CD8-positive, alpha-beta memory T cell (primary cell): ENCODE measurements at regions of chr19 and their contacts with region 1.

Region 1: DNA sequence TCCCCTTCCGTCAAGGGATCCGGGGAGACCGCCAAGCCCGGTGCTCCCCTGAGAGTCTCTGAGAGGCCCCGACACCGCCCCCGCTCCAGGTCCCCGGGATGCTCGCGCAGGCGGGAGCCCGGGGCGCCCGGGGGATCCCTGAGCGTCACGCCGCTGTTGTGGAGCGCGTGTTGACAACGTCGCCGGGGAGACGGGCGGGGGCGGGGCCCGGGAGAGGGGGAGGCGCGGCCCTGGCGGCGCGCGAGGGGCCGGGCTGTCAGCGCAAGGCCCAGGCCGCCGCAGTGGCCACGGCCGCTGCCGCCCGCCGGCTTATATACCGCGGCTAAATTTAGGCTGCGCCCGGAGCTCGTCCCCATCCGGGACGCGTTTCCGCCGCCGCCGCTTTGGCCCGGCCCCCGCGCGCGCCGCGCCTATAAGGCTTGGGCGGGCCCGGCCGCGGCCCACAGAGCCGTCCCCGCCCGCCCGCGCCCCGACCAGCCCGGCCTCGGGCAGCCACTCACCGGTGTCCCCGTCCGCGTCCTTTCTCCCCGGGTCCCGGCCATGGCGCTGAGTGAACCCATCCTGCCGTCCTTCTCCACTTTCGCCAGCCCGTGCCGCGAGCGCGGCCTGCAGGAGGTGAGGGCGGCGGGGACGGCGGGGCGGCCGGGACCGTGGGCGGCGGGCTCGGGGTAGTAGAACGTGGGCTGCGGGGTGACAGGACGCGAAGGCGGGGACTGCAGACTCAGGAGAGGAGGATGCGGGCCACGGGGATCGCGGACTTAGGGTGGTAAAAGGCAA is at the start of gene KLF2:
- DNase-seq: peak; percentile 93 to 98 (median 95)
- H3K4me3 ChIP-seq: peak within 1 kb of the TSS; percentile 100
- H3K4me3 Mint-ChIP-seq: peak within 1 kb of the TSS; percentile 78 to 100 (median 81)
- H3K27ac ChIP-seq: peak within 1 kb of the TSS; percentile 100
- H3K27ac Mint-ChIP-seq: peak within 1 kb of the TSS; percentile 91 to 99 (median 97)
- H3K4me1 ChIP-seq: peaks cover 37% of the 10 kb centered on the region
- H3K4me1 Mint-ChIP-seq: peaks cover 29 to 55% (median 38%) of the 10 kb centered on the region in 3 donors
- H3K27me3 ChIP-seq: no peaks in the 10 kb centered on the region
- H3K27me3 Mint-ChIP-seq: peaks cover 0 to 37% of the 10 kb centered on the region in 2 donors
- total RNA-seq, gene KLF2: 33.7 to 37.5 TPM

Region 2: DNA sequence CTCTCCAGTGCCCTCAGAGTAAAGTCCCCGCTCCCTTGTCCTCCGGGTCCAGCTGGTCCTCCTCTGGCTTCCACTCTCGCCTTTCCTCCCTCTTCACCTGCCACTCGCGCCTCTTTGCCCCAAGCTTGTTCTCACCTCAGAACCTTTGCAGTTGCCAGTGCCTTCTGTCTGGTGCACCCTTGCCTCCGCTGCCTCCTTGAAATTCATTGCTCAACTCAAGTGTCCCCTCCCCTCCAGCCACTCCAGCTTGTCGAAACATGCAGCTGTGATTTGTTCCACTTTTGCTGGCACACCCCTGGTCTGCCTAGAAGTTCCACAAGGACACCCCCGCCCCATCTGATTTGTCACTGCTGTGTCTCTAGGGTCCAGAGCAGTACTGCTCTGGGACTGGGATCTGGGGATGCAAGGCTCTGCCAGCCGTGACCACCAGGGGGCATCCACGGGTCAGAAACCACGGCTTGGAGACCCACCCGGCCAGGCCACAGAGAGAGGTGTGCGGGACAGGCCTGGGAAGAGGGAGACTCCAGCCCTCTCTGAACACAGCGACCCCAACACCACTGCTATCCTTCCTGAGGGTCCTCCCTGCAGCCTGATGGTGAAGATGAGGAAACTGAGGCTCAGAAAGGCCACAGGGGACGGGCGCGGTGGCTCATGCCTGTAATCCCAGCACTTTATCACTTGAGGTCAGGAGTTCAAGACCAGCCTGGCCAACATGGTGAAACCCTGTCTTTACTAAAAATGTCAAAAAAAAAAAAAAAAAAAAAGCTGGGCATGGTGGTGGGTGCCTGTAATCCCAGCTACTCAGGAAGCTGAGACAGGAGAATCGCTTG is 77.0 kb before region 1 on chr19:
- CTCF ChIA-PET with region 1: interaction called, 62 read pairs
- POLR2A ChIA-PET with region 1: interaction called, 23 read pairs
- DNase-seq: peak; percentile 63 to 86 (median 78)
- H3K4me3 ChIP-seq: no peak overlapping the region
- H3K4me3 Mint-ChIP-seq: peak overlapping the region in 5 of 7 donors; percentile 11 to 70 (median 41)
- H3K27ac ChIP-seq: no peak overlapping the region
- H3K27ac Mint-ChIP-seq: peak overlapping the region in 5 of 8 donors; percentile 43 to 89 (median 87)
- H3K4me1 ChIP-seq: peaks cover 28% of the 10 kb centered on the region
- H3K4me1 Mint-ChIP-seq: peaks cover 16 to 23% (median 17%) of the 10 kb centered on the region in 3 donors
- H3K27me3 ChIP-seq: no peaks in the 10 kb centered on the region
- H3K27me3 Mint-ChIP-seq: peaks cover 3 to 5% of the 10 kb centered on the region in 2 donors

Region 3: DNA sequence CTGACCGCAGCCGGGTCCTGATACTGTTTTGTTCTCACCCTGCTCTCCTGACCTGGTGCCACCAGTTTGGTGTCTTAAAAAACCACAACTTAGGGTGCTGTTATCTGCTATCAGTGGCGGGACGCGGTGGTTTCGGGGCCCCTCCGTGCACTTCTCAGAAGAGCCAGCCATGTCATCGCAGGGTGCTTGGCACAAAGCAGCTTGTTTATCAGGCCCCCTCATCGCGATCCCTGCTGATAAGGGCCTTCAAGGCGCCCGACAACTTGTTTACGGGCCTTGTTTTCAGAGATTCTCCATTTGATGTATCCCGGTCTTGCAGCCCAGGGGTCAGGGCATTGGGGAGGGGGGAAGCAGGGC is 58.0 kb before region 1 on chr19:
- CTCF ChIA-PET with region 1: no interaction called
- POLR2A ChIA-PET with region 1: interaction called, 27 read pairs
- DNase-seq: peak; percentile 52 to 74 (median 59)
- H3K4me3 ChIP-seq: peak overlapping the region; percentile 25
- H3K4me3 Mint-ChIP-seq: peak overlapping the region in 6 of 7 donors; percentile 53 to 81 (median 72)
- H3K27ac ChIP-seq: peak overlapping the region; percentile 16
- H3K27ac Mint-ChIP-seq: peak overlapping the region; percentile 51 to 97 (median 89)
- H3K4me1 ChIP-seq: peaks cover 52% of the 10 kb centered on the region
- H3K4me1 Mint-ChIP-seq: peaks cover 47 to 65% (median 60%) of the 10 kb centered on the region in 3 donors
- H3K27me3 ChIP-seq: no peaks in the 10 kb centered on the region
- H3K27me3 Mint-ChIP-seq: peaks cover 0 to 2% of the 10 kb centered on the region in 2 donors

Region 4: GRCh38 chr19:16289594-16289993 is 35.0 kb before region 1 on chr19:
- CTCF ChIA-PET with region 1: no interaction called
- POLR2A ChIA-PET with region 1: no interaction called
- DNase-seq: no peak
- H3K4me3 ChIP-seq: no peak overlapping the region
- H3K4me3 Mint-ChIP-seq: no peak overlapping the region
- H3K27ac ChIP-seq: no peak overlapping the region
- H3K27ac Mint-ChIP-seq: peak overlapping the region in 1 of 8 donors; percentile 57
- H3K4me1 ChIP-seq: peaks cover 11% of the 10 kb centered on the region
- H3K4me1 Mint-ChIP-seq: peaks cover 9 to 16% (median 11%) of the 10 kb centered on the region in 3 donors
- H3K27me3 ChIP-seq: no peaks in the 10 kb centered on the region
- H3K27me3 Mint-ChIP-seq: peaks cover 4 to 16% of the 10 kb centered on the region in 2 donors

Region 5: GRCh38 chr19:16371540-16371986 is 47.0 kb after region 1 on chr19:
- CTCF ChIA-PET with region 1: interaction called, 403 read pairs
- POLR2A ChIA-PET with region 1: interaction called, 1,176 read pairs
- DNase-seq: peak; percentile 86 to 97 (median 96)
- H3K4me3 ChIP-seq: peak overlapping the region; percentile 46
- H3K4me3 Mint-ChIP-seq: no peak overlapping the region
- H3K27ac ChIP-seq: peak overlapping the region; percentile 84
- H3K27ac Mint-ChIP-seq: no peak overlapping the region
- H3K4me1 ChIP-seq: peaks cover 96% of the 10 kb centered on the region
- H3K4me1 Mint-ChIP-seq: peaks cover 0 to 43% (median 33%) of the 10 kb centered on the region in 3 donors
- H3K27me3 ChIP-seq: no peaks in the 10 kb centered on the region
- H3K27me3 Mint-ChIP-seq: peaks cover 0 to 7% of the 10 kb centered on the region in 2 donors

Region 6: DNA sequence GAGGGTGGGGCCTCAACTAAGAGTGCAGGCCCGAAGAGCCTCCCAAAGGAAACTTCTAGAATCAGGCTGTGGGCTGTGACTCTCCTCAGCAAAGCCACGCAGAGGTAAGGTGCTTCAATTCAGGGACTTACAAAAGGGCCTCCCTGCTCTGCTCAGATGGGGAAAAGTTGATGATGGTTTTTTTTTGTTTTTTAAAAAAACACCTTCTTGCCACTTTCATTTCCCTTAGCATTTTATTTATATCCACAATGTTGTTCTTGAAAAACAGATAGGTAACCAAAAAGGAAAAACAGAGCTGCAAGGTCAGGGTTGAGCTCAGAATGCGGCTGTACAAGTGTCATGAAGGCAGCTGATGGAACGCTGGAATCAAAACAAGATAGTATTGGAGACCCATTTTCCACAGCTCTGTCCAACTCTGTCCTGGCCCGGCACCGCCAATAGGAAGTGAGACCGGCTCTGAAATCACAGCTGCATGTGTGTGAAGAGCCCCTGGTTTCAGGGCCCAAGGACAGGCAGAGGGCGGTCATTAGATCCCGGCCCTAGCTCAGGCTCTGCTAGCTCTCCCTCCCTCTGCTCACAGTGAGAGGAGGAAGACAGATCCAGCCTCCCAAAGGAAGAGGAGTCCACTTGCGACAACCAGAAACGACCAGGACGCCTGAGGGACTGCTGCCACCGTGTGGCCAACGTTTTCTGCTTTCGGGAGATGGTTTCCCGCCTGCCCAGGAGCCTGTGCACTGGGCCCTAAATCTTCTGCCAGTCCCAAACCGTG is 58.4 kb after region 1 on chr19:
- CTCF ChIA-PET with region 1: interaction called, 130 read pairs
- POLR2A ChIA-PET with region 1: interaction called, 219 read pairs
- DNase-seq: peak; percentile 66 to 83 (median 70)
- H3K4me3 ChIP-seq: peak overlapping the region; percentile 45
- H3K4me3 Mint-ChIP-seq: peak overlapping the region; percentile 54 to 87 (median 72)
- H3K27ac ChIP-seq: peak overlapping the region; percentile 40
- H3K27ac Mint-ChIP-seq: peak overlapping the region; percentile 91 to 97 (median 95)
- H3K4me1 ChIP-seq: peaks cover 68% of the 10 kb centered on the region
- H3K4me1 Mint-ChIP-seq: peaks cover 55 to 79% (median 55%) of the 10 kb centered on the region in 3 donors
- H3K27me3 ChIP-seq: no peaks in the 10 kb centered on the region
- H3K27me3 Mint-ChIP-seq: no peaks in the 10 kb centered on the region

Region 7: DNA sequence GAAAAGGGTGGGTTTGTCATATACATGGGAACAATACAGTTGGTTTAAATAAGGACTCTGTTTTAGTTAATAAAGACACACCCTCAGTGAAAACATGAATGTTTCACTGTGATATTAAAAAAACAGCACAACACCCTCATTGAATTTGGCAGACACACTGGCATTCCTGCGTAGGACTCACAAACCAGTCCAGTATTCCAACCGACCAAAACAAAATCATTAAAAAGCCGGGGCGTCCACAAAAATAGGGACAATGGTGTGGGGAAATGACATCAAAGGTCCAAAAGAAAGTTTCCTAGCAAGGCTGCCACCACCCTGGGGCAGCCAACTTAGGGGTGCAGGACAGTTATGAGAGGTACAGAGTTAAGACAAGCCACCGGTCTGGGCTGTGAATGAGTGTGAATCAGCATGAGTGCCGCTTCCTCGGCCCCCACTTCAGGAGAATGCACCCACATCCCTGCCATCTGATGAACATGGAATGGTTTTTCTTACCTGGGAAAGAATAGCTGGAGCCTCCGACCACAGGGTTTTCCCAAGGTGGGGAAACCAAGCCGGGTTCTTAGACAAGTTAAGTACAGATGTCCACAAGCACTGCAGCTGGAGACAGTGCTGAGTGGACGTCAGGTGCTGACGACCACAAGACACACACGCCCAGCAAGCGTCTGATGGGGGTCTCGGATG is 73.4 kb after region 1 on chr19:
- CTCF ChIA-PET with region 1: no interaction called
- POLR2A ChIA-PET with region 1: no interaction called
- DNase-seq: no peak
- H3K4me3 ChIP-seq: no peak overlapping the region
- H3K4me3 Mint-ChIP-seq: peak overlapping the region in 1 of 7 donors; percentile 37
- H3K27ac ChIP-seq: no peak overlapping the region
- H3K27ac Mint-ChIP-seq: peak overlapping the region in 3 of 8 donors; percentile 35 to 79 (median 60)
- H3K4me1 ChIP-seq: peaks cover 15% of the 10 kb centered on the region
- H3K4me1 Mint-ChIP-seq: peaks cover 0 to 4% (median 0%) of the 10 kb centered on the region in 3 donors
- H3K27me3 ChIP-seq: no peaks in the 10 kb centered on the region
- H3K27me3 Mint-ChIP-seq: no peaks in the 10 kb centered on the region

Region 8: DNA sequence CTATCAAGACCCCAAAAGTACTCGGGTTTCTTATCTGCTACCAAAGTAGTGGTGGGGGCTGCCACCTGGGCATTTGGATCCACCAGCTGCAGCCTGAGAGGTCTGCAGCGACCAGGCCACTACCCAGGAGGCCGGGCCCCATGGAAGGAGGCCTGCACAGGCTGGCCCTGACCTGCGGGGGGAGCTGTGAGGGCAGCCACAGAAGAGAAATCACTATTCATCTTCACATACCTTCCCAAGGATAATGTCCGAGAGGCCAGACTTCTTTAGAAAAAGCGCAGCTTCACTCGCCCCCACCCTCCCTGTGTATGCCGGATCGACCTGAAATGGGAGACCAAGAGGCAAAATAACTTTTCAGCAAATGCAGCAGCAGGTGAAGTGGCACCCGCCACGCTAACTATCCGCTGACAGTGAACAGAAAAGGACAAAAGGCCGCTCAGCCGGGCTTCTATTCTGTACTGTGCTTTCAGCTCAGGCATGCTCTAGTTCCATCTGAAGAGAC is 117.1 kb after region 1 on chr19:
- CTCF ChIA-PET with region 1: no interaction called
- POLR2A ChIA-PET with region 1: no interaction called
- DNase-seq: no peak
- H3K4me3 ChIP-seq: no peak overlapping the region
- H3K4me3 Mint-ChIP-seq: no peak overlapping the region
- H3K27ac ChIP-seq: no peak overlapping the region
- H3K27ac Mint-ChIP-seq: no peak overlapping the region
- H3K4me1 ChIP-seq: peaks cover 13% of the 10 kb centered on the region
- H3K4me1 Mint-ChIP-seq: peaks cover 33 to 50% (median 46%) of the 10 kb centered on the region in 3 donors
- H3K27me3 ChIP-seq: no peaks in the 10 kb centered on the region
- H3K27me3 Mint-ChIP-seq: no peaks in the 10 kb centered on the region